Esophagus muscularis mucosa (tissue), 4 donors: ENCODE measurements at regions of chr11 and their contacts with region 1.

Region 1: GRCh38 chr11:15988693-15989231 is 367.6 kb downstream of the SOX6 start:
- DNase-seq: no peak
- H3K4me3 ChIP-seq: no peak overlapping the region
- H3K27ac ChIP-seq: no peak overlapping the region
- H3K4me1 ChIP-seq: peaks cover 9 to 15% (median 10%) of the 10 kb centered on the region in 4 donors
- H3K27me3 ChIP-seq: no peaks in the 10 kb centered on the region
- CTCF ChIP-seq: peak in 2 of 3 experiments; percentile 37 to 40
- EP300 ChIP-seq: no peak
- POLR2A ChIP-seq: no peak

Region 2: DNA sequence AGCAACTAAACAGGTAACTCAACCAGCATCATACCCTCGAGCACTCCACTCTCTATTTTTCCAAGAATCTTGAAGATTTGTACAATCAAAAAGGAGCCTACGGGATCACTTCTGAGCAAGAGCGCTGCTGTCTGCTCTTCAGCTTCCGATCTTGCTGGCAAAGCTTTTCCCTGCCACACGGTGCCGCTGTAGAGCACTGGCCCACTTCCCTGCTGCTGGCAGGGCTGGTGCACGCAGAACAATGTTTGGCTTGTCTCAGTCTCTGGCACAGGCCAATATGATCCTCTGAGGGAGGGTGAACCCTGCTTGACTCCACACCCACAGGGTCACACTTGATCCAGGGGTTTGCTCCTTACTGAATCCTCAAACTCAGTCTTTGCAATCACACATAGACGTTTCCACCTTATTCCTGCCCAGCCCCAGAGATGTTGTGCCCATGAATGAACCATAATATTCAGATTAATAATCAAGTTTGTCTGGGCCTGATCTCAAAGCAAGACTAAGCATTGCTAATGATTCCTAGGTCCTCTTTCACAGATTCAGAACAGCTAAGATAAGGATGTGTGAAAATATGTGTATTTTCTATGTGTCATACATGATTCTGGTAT is 169.0 kb before region 1 on chr11:
- intact Hi-C with region 1: loop called (anchors 10 kb)
- DNase-seq: peak; percentile 89
- H3K4me3 ChIP-seq: no peak overlapping the region
- H3K27ac ChIP-seq: no peak overlapping the region
- H3K4me1 ChIP-seq: peaks cover 41 to 52% (median 47%) of the 10 kb centered on the region in 4 donors
- H3K27me3 ChIP-seq: no peaks in the 10 kb centered on the region
- CTCF ChIP-seq: peak; percentile 73 to 90 (median 77)
- EP300 ChIP-seq: no peak
- POLR2A ChIP-seq: no peak